Mammary epithelial cell (primary cell): ENCODE measurements at regions of chr3 and their contacts with region 1.

Region 1: GRCh38 chr3:8607234-8608040 is 37.2 kb downstream of the SSUH2 start:
- DNase-seq: peak; percentile 66
- H3K4me3 ChIP-seq: no peak overlapping the region
- H3K27ac ChIP-seq: no peak overlapping the region
- H3K4me1 ChIP-seq: no peaks in the 10 kb centered on the region
- H3K27me3 ChIP-seq: no peaks in the 10 kb centered on the region
- CTCF ChIP-seq: peak; percentile 81 to 87

Region 2: DNA sequence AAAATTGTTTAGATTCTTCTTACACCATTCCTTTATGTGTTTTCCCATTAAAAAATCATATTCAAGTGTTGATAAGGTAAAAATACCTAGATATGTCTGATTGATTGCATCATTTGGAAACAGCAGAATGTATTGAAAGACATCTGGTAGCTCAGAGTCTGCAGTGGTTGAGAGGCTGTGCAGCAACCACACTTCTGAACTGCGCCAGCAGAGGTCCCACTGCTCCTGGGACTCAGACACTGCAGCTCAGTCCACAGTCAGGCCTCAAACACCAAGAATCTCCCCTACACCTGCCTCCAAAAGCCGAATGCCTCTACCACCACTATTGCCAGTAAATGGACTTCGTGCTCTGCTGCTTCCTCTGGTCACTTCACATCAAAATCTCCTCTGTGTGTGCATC is 282.7 kb before region 1 on chr3:
- CTCF ChIA-PET with region 1: no interaction called
- dilution Hi-C with region 1: no loop called
- in situ Hi-C with region 1: no loop called
- intact Hi-C with region 1: loop called (anchors 1 kb)
- DNase-seq: peak; percentile 13
- H3K4me3 ChIP-seq: no peak overlapping the region
- H3K27ac ChIP-seq: no peak overlapping the region
- H3K4me1 ChIP-seq: peaks cover 10% of the 10 kb centered on the region
- H3K27me3 ChIP-seq: peaks cover 2% of the 10 kb centered on the region
- CTCF ChIP-seq: peak; percentile 50 to 70

Region 3: GRCh38 chr3:8441969-8442559 is 165.4 kb before region 1 on chr3:
- CTCF ChIA-PET with region 1: no interaction called
- dilution Hi-C with region 1: loop called (anchors 25 kb)
- in situ Hi-C with region 1: loop called (anchors 5 kb)
- intact Hi-C with region 1: loop called (anchors 1 kb)
- DNase-seq: peak; percentile 30
- H3K4me3 ChIP-seq: no peak overlapping the region
- H3K27ac ChIP-seq: no peak overlapping the region
- H3K4me1 ChIP-seq: peaks cover 5% of the 10 kb centered on the region
- H3K27me3 ChIP-seq: no peaks in the 10 kb centered on the region
- CTCF ChIP-seq: peak; percentile 63 to 75

Region 4: DNA sequence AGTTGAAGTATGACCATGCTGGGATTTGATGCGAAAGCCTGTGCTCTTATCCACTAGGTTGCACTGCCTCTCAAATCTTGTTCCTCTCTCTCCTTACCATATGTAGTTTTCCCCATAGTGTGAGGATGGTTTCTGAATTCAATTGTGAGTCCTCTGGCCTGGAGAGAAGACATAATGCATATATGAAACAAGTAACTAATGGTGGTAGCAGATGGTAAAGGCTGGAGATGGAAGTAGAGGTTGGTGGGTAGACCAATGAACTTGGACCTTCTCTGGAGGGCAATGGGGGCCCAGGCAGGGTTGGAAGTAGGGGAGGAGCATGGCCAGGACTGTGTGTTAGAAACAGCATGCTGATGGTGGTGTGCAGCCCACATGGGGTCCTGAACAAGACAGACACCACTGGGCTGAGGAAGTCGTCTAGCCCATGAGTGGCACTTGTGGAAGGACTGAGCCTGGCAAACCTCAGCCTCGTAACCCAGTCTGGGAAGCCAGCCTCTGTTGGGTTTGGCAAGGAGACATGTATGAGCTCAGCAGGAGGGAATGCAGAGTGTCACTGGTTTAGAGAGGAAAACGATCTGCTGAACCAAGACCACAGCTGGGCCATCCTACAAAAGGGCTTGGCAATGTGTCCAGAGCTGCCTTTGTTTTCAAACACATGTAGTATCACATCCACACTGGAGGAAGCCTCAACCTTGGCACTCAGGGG is 124.3 kb before region 1 on chr3:
- CTCF ChIA-PET with region 1: interaction called, 6 read pairs
- dilution Hi-C with region 1: no loop called
- in situ Hi-C with region 1: no loop called
- intact Hi-C with region 1: loop called (anchors 1 kb)
- DNase-seq: peak; percentile 87
- H3K4me3 ChIP-seq: no peak overlapping the region
- H3K27ac ChIP-seq: no peak overlapping the region
- H3K4me1 ChIP-seq: peaks cover 11% of the 10 kb centered on the region
- H3K27me3 ChIP-seq: no peaks in the 10 kb centered on the region
- CTCF ChIP-seq: no peak